Endothelial cell of umbilical vein (primary cell): ENCODE measurements at regions of chr19 and their contacts with region 1.

Region 1: DNA sequence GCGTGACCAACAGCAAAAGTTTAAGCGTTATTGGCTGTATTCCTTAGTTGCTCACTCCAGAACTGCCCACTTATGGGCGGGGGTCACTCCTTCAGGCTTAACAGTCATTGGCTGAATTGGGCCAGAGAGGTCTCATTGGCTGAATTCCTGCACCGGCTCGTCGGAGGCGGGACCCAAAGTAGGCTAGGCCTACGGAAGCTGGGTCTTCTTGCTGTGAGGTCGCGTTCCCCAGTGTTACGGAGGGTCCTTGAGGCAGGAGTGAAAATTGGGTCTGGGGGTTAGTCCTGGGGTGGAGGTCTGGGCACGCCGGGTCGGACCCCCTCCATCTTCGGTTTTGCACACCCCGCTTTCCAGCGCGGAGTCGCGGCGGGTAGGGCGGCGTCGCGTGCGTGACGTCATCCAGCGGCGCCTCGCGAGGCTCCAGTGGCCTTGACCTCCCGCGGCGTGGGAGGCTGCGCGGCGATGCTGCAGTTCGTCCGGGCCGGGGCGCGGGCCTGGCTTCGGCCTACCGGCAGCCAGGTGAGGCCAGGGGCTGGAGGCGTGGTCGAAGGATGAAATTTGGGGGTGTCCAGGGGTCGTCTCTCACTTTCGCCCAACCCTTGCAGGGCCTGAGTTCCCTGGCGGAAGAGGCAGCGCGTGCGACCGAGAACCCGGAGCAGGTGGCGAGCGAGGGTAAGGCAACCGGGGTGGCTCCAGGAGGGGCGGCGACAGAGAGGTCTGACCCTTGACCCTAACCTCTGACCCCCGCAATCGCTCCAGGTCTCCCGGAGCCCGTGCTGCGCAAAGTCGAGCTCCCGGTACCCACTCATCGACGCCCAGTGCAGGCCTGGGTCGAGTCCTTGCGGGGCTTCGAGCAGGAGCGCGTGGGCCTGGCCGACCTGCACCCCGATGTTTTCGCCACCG is at the start of gene MRPL4:
- DNase-seq: peak; percentile 99
- H3K4me3 ChIP-seq: peak within 1 kb of the TSS; percentile 14 to 89 (median 59)
- H3K27ac ChIP-seq: peak within 1 kb of the TSS; percentile 14
- H3K4me1 ChIP-seq: peaks cover 8% of the 10 kb centered on the region
- H3K27me3 ChIP-seq: no peaks in the 10 kb centered on the region
- CTCF ChIP-seq: no peak
- POLR2A ChIP-seq: peak; percentile 72
- total RNA-seq, gene MRPL4: 69.4 and 70.4 TPM in 2 replicates

Region 2: DNA sequence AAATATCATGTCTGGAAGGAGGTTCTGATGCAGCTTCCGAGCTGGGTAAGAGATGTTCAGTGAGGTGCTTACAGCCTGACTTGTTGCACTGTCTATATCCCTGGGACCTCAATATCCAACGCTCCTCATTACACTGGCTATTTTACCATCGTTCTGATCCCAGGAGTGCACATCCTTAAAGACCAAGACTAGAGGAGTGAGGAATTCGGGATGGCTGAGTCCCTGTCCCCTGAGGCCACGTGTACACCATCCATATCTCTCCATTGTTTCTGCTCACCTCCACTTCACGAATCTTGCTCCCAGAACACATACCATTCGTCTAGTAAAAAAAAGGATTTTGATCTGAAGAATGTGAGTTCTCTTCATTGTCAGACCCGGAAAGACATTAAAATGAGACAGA is 1144.7 kb before region 1 on chr19 and contains the start of gene OR7G2:
- CTCF ChIA-PET with region 1: no interaction called
- POLR2A ChIA-PET with region 1: no interaction called
- dilution Hi-C with region 1: no loop called
- intact Hi-C with region 1: no loop called
- DNase-seq: no peak
- H3K4me3 ChIP-seq: no peak within 1 kb of the TSS
- H3K27ac ChIP-seq: no peak within 1 kb of the TSS
- H3K4me1 ChIP-seq: no peaks in the 10 kb centered on the region
- H3K27me3 ChIP-seq: no peaks in the 10 kb centered on the region
- CTCF ChIP-seq: no peak
- POLR2A ChIP-seq: no peak
- total RNA-seq, gene OR7G2: not detected in 2 replicates

Region 3: DNA sequence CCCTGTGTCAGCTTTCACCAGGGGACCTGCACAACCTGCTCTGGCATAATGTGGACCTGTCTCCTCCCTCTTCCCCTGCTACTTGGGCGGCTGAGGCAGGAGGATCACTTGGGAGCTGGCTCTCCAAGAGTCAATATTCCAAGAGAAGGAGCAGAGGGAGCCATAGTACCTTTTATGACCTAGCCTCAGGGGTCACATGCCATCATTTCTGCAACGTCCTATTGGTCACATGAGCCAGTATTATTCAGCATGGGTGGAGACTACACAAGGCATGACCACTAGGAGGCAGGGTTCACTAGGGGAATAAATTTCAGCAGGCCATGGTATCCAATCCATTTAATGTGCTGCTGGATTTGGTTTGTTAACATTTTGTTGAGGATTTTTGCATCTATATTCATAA is 177.9 kb before region 1 on chr19:
- CTCF ChIA-PET with region 1: interaction called, 7 read pairs
- POLR2A ChIA-PET with region 1: no interaction called
- dilution Hi-C with region 1: no loop called
- intact Hi-C with region 1: loop called (anchors 2 kb)
- DNase-seq: peak; percentile 25
- H3K4me3 ChIP-seq: no peak overlapping the region
- H3K27ac ChIP-seq: no peak overlapping the region
- H3K4me1 ChIP-seq: no peaks in the 10 kb centered on the region
- H3K27me3 ChIP-seq: no peaks in the 10 kb centered on the region
- CTCF ChIP-seq: peak; percentile 8 to 46
- POLR2A ChIP-seq: no peak

Region 4: GRCh38 chr19:10120538-10121189 is 131.4 kb before region 1 on chr19:
- CTCF ChIA-PET with region 1: interaction called, 8 read pairs
- POLR2A ChIA-PET with region 1: no interaction called
- dilution Hi-C with region 1: no loop called
- intact Hi-C with region 1: loop called (anchors 2 kb)
- DNase-seq: peak; percentile 40
- H3K4me3 ChIP-seq: no peak overlapping the region
- H3K27ac ChIP-seq: no peak overlapping the region
- H3K4me1 ChIP-seq: peaks cover 11% of the 10 kb centered on the region
- H3K27me3 ChIP-seq: no peaks in the 10 kb centered on the region
- CTCF ChIP-seq: no peak
- POLR2A ChIP-seq: no peak

Region 5: DNA sequence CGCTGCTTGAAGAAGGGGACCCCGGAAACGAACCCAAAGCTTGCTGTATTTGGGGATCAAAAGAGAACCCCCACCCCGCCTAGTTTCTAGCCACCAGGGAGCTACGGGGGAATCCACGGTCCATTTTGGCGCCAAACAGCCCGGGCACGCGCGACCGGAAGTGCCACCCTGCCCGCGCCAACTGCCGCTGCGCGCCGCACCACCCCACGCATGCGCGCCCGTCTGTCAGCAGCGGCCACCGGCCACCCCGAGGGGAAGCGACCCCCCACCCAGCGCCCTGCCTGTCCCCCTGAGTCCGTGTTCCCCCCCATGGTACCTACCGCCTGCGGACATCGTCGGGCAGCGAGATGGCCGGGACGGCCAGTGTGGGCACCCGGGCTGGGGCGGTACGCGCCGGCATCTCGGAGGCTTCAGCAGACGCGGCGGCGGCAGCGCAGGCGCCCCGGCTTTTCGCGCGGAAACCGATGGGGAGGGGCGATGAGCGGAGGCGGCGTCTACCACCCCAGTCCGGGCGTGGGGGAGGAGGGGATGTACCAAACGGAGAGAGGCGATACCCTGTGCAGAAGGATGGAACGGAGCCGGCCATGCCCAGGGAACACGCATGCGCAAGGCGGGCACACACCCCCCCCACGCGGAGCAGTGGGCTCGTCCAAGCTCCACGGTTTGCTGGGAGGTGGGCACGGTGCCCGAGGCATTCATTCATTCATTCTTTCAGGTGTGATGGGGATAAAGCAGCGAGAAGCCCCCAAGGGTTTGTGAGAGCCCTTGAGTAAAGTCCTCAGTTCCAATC is 57.3 kb before region 1 on chr19 and contains the start of gene DNMT1:
- CTCF ChIA-PET with region 1: interaction called, 9 read pairs
- POLR2A ChIA-PET with region 1: no interaction called
- dilution Hi-C with region 1: no loop called
- intact Hi-C with region 1: loop called (anchors 1 kb)
- DNase-seq: peak; percentile 96
- H3K4me3 ChIP-seq: peak within 1 kb of the TSS; percentile 67 to 88 (median 86)
- H3K27ac ChIP-seq: peak within 1 kb of the TSS; percentile 46
- H3K4me1 ChIP-seq: peaks cover 16% of the 10 kb centered on the region
- H3K27me3 ChIP-seq: no peaks in the 10 kb centered on the region
- CTCF ChIP-seq: no peak
- POLR2A ChIP-seq: peak; percentile 94
- total RNA-seq, gene DNMT1: 154 and 165 TPM in 2 replicates

Region 6: GRCh38 chr19:10219678-10220077 is 32.4 kb before region 1 on chr19:
- CTCF ChIA-PET with region 1: interaction called, 48 read pairs
- POLR2A ChIA-PET with region 1: no interaction called
- dilution Hi-C with region 1: no loop called
- intact Hi-C with region 1: no loop called
- DNase-seq: no peak
- H3K4me3 ChIP-seq: no peak overlapping the region
- H3K27ac ChIP-seq: no peak overlapping the region
- H3K4me1 ChIP-seq: no peaks in the 10 kb centered on the region
- H3K27me3 ChIP-seq: no peaks in the 10 kb centered on the region
- CTCF ChIP-seq: peak in 1 of 2 donors; percentile 26
- POLR2A ChIP-seq: no peak

Region 7: GRCh38 chr19:10332955-10333757 is 81.1 kb after region 1 on chr19 and contains the start of gene RAVER1:
- CTCF ChIA-PET with region 1: interaction called, 4 read pairs
- POLR2A ChIA-PET with region 1: no interaction called
- dilution Hi-C with region 1: no loop called
- intact Hi-C with region 1: loop called (anchors 5 kb)
- DNase-seq: peak; percentile 97
- H3K4me3 ChIP-seq: peak within 1 kb of the TSS; percentile 31 to 71 (median 47)
- H3K27ac ChIP-seq: peak within 1 kb of the TSS; percentile 78
- H3K4me1 ChIP-seq: peaks cover 16% of the 10 kb centered on the region
- H3K27me3 ChIP-seq: no peaks in the 10 kb centered on the region
- CTCF ChIP-seq: no peak
- POLR2A ChIP-seq: peak; percentile 83
- total RNA-seq, gene RAVER1: 47.6 and 55.1 TPM in 2 replicates

Region 8: DNA sequence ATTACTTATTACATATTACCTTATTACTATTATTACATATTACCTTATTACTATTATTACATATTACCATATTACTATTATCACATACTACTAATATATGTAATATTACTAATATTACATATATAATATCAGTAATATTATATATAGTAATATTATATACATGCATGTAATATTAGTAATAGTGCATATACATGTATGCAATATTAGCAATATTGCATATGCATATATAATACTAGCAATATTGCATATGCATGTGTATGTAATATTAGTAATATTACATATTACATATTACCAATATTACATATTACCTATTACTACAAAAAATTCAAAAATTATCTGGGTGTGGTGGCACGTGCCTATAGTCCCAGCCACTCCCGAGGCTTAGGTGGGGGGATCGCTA is 190.7 kb after region 1 on chr19:
- CTCF ChIA-PET with region 1: no interaction called
- POLR2A ChIA-PET with region 1: no interaction called
- dilution Hi-C with region 1: no loop called
- intact Hi-C with region 1: no loop called
- DNase-seq: no peak
- H3K4me3 ChIP-seq: no peak overlapping the region
- H3K27ac ChIP-seq: no peak overlapping the region
- H3K4me1 ChIP-seq: no peaks in the 10 kb centered on the region
- H3K27me3 ChIP-seq: no peaks in the 10 kb centered on the region
- CTCF ChIP-seq: no peak
- POLR2A ChIP-seq: no peak